Ovary (tissue), 10 donors: ENCODE measurements at regions of chr2 and their contacts with region 1.

Region 1: DNA sequence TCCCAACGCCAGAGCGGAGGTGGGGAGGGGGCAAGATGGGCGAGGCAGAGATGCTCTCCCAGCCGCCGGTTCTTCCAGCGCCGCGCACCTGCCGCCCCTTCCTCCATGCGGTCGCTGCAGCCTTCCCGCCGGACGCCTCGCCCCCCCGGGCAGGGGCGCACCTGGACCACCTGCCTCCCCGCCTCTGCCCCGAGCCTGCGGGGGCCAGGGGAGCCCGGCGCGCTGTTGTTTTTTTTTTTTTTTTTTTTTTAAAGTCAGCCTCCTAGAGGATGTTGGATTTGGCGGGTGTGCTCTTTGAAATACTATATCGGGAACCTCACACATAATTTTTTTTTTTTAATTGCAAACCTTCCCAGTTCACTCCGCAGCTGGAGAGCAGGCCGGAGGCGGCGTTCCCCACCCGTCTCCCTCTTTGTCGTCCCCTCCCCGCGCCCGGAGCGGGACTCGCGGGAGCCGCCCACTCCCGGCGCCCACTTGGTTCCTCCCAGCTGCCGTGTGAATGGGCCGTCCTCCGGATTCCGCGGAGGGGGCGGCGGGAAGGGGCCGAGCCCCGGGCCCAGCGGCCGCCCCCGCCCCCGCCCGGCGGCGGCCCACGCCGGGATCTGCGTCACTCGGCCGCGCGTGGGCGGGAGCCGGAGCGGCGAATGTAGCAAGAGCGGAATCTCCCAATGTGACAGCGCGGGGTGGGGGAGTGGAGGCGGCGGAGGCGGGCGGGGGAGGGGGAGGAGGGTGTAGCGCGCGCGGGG is 421 bp upstream of the NAB1 start:
- DNase-seq: peak; percentile 89 to 93 (median 92)
- H3K4me3 ChIP-seq: peak overlapping the region; percentile 98
- H3K27ac ChIP-seq: peak overlapping the region; percentile 62 to 75
- H3K4me1 ChIP-seq: no peaks in the 10 kb centered on the region
- H3K27me3 ChIP-seq: no peaks in the 10 kb centered on the region
- CTCF ChIP-seq: no peak
- EP300 ChIP-seq: no peak
- POLR2A ChIP-seq: peak; percentile 44

Region 2: GRCh38 chr2:190488516-190489233 is 159.8 kb before region 1 on chr2:
- intact Hi-C with region 1: no loop called
- DNase-seq: no peak
- H3K4me3 ChIP-seq: no peak overlapping the region
- H3K27ac ChIP-seq: no peak overlapping the region
- H3K4me1 ChIP-seq: no peaks in the 10 kb centered on the region
- H3K27me3 ChIP-seq: no peaks in the 10 kb centered on the region
- CTCF ChIP-seq: no peak
- EP300 ChIP-seq: no peak
- POLR2A ChIP-seq: no peak

Region 3: GRCh38 chr2:190534310-190535120 is 113.9 kb before region 1 on chr2 and contains the start of gene NEMP2:
- intact Hi-C with region 1: loop called in 3 of 4 experiments (anchors 5 to 10 kb)
- DNase-seq: peak; percentile 73 to 87 (median 78)
- H3K4me3 ChIP-seq: peak within 1 kb of the TSS; percentile 57
- H3K27ac ChIP-seq: peak within 1 kb of the TSS; percentile 97
- H3K4me1 ChIP-seq: peaks cover 1% of the 10 kb centered on the region
- H3K27me3 ChIP-seq: no peaks in the 10 kb centered on the region
- CTCF ChIP-seq: peak in 1 of 3 donors; percentile 24
- EP300 ChIP-seq: no peak
- POLR2A ChIP-seq: peak; percentile 46
- total RNA-seq, gene NEMP2: 2.8 to 6.4 (median 4.5) TPM